MCF 10A (cell line): ENCODE measurements at regions of chr2 and their contacts with region 1.

Region 1: DNA sequence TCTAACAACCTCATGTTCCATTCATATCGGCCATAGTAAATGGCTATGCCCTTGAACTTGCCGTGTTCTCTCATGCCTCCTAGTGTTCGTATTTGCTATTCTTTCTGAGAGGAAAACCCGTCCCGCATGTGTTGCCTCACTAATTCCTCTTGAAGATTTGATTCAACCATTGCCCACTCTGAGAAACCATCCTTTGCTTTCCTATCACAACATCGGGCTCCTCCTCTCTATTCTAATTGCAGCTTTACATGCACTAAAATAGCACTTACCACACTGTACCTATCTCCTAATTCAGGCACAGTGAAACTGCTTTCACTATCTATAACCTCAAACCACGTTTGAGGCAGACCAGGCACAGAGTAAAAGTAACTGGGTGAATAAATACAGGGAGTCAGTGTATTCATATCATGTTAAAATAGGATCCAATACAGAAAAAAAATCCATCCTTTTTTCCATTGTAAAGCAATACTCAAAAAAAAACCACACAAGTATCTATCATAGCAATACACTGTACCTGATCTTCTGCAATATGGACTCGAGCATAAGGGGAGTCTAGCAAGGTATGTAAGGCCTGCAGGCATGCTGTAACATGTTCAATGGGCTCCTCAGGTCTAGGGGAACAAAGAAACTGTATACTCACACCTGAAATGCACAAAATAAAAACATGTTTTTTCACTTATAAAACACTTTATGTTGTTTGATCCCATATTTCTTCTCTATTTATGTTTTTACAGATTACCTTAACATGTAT is 39.0 kb upstream of the STRN start:
- DNase-seq: peak; percentile 36
- H3K4me3 Mint-ChIP-seq: no peak overlapping the region
- H3K27ac Mint-ChIP-seq: no peak overlapping the region
- H3K4me1 Mint-ChIP-seq: no peaks in the 10 kb centered on the region
- H3K27me3 Mint-ChIP-seq: no peaks in the 10 kb centered on the region
- CTCF ChIP-seq: peak; percentile 40

Region 2: GRCh38 chr2:36820942-36821605 is 184.2 kb before region 1 on chr2:
- CTCF ChIA-PET with region 1: interaction called, 3 read pairs
- POLR2A ChIA-PET with region 1: no interaction called
- intact Hi-C with region 1: loop called (anchors 1 kb)
- DNase-seq: no peak
- H3K4me3 Mint-ChIP-seq: no peak overlapping the region
- H3K27ac Mint-ChIP-seq: no peak overlapping the region
- H3K4me1 Mint-ChIP-seq: no peaks in the 10 kb centered on the region
- H3K27me3 Mint-ChIP-seq: no peaks in the 10 kb centered on the region
- CTCF ChIP-seq: no peak

Region 3: GRCh38 chr2:36871068-36871707 is 134.1 kb before region 1 on chr2:
- CTCF ChIA-PET with region 1: no interaction called
- POLR2A ChIA-PET with region 1: no interaction called
- intact Hi-C with region 1: loop called (anchors 10 kb)
- DNase-seq: no peak
- H3K4me3 Mint-ChIP-seq: no peak overlapping the region
- H3K27ac Mint-ChIP-seq: no peak overlapping the region
- H3K4me1 Mint-ChIP-seq: no peaks in the 10 kb centered on the region
- H3K27me3 Mint-ChIP-seq: no peaks in the 10 kb centered on the region
- CTCF ChIP-seq: no peak

Region 4: DNA sequence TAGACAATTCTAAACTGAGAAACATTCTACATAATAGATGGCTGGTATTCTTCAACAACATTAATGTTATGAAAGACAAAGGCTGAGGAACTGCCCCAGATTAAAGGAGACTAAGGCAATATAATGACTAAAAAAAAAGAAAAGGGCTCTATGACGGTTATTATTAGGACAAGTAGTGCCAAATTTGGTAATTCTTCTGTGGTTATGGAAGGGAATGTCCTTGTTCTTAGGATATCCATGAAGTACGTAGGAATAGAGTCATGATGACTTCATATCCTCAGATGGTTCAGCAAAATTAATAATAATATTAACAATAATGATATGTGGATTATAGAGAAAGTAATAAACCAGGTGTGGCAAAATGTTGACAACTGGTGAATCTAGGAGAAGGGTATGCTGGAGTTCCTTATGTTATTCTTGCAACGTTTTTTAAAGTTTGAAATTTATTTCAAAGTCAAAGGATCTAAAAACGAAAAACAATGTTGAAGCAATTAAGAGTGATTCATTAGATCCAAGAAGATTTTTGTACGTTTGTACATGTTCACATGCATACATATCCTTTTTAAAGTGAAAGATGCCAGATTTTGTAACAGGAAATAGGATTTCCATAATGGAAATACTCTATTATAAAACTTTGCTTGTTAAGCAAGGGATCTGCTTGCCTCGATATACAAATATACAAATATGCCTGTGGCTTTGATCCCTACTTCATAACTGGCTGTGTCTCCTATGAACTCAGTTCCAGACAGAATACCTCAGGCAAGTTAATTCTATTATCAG is 11.3 kb before region 1 on chr2:
- CTCF ChIA-PET with region 1: interaction called, 10 read pairs
- POLR2A ChIA-PET with region 1: no interaction called
- intact Hi-C with region 1: no loop called
- DNase-seq: no peak
- H3K4me3 Mint-ChIP-seq: no peak overlapping the region
- H3K27ac Mint-ChIP-seq: no peak overlapping the region
- H3K4me1 Mint-ChIP-seq: no peaks in the 10 kb centered on the region
- H3K27me3 Mint-ChIP-seq: no peaks in the 10 kb centered on the region
- CTCF ChIP-seq: no peak